Activated T-helper 2 cell treated with anti-CD3 and anti-CD28 coated beads, Interferon-gamma antibody, Interleukin-2, Interleukin-4, amounts not matched to agents 10 μg/mL and 5 μg/mL and 100 μg/mL, durations not matched to agents 14 hours and 24 hours and 36 hours (primary cell): ENCODE measurements at regions of chr3 and their contacts with region 1.

Region 1: DNA sequence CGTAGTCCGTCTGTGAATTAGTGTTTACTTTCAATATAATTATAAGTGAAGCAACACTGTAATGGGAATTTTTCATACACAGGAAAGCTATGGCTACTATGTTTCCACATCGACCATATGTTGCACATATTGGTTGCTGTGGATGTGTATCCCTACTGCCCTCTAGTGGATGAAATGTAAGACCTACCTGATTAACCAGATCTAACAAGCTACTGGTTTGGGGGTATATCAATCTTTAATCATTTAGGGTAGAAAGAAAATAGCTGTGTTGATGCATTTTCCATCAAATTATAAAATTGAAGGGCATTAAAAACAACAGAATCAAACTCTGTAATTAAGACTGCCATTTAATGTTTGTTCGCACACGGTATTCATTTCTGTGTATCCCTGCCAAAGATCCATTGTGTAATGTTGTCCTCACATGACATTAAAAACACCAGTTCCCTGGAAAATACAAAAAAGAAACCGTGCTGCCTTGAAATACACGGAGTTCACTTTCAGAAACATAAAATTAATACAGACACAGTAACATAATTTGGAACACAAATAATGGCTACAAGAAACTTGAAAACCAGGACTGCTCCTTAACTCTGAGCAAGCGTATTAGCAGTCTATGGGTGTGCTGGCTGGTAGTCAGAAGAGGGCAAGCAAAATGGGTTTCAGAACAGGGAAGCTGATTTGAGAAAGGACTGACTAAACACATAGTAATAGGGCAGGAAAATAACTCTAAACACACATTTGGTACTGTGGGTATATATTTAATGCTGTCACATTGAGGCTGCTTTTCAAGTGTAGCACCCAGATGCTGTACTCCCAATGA is 125.1 kb downstream of the TIGIT start:
- DNase-seq: no peak
- H3K4me3 Mint-ChIP-seq: no peak overlapping the region
- H3K27ac Mint-ChIP-seq: peak overlapping the region; percentile 84
- H3K4me1 Mint-ChIP-seq: peaks cover 29% of the 10 kb centered on the region
- H3K27me3 Mint-ChIP-seq: no peaks in the 10 kb centered on the region

Region 2: DNA sequence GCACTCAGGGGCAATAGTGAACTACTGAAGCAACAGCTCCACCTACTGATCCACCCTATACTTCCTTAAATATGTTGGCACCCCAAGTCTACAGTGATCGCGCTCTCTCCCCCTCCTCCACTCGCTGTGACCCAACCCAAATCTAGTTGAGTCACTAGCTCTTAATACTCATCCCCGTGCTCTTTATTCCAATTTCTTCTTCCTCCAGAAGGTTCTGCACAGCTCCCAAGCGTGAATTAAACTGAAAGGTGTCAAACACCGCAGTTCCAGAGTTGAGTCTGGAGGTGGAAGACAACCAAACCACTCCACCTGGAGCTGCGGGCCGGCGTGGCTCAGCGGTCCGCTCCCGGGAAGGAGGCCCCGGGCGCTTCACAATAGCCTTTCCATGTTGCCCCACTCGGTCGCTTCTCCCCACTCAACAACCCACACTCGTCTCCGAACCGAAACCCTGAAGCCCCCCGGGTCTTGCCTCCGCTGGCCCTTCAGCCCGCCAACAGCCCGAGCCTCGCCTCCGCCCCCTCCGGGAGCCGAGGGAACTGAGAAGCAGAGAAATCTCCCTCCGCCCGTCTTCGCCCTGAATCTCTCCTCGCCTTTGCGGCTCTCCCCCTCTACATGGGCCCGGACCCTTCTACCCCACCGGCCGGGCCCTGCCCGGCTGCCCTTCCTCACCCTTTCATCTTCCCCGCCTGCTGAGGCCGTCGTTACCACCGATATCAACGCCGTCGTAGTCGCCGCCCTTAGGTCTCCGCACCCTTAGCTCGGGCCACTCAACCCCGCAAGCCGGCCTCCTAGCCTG is 673.5 kb before region 1 on chr3:
- intact Hi-C with region 1: loop called (anchors 2 kb)
- DNase-seq: peak; percentile 73
- H3K4me3 Mint-ChIP-seq: peak overlapping the region; percentile 96
- H3K27ac Mint-ChIP-seq: peak overlapping the region; percentile 100
- H3K4me1 Mint-ChIP-seq: peaks cover 64% of the 10 kb centered on the region
- H3K27me3 Mint-ChIP-seq: peaks cover 3% of the 10 kb centered on the region

Region 3: GRCh38 chr3:114144909-114145647 is 273.9 kb before region 1 on chr3:
- intact Hi-C with region 1: loop called (anchors 1 kb)
- DNase-seq: no peak
- H3K4me3 Mint-ChIP-seq: no peak overlapping the region
- H3K27ac Mint-ChIP-seq: no peak overlapping the region
- H3K4me1 Mint-ChIP-seq: peaks cover 6% of the 10 kb centered on the region
- H3K27me3 Mint-ChIP-seq: no peaks in the 10 kb centered on the region

Region 4: DNA sequence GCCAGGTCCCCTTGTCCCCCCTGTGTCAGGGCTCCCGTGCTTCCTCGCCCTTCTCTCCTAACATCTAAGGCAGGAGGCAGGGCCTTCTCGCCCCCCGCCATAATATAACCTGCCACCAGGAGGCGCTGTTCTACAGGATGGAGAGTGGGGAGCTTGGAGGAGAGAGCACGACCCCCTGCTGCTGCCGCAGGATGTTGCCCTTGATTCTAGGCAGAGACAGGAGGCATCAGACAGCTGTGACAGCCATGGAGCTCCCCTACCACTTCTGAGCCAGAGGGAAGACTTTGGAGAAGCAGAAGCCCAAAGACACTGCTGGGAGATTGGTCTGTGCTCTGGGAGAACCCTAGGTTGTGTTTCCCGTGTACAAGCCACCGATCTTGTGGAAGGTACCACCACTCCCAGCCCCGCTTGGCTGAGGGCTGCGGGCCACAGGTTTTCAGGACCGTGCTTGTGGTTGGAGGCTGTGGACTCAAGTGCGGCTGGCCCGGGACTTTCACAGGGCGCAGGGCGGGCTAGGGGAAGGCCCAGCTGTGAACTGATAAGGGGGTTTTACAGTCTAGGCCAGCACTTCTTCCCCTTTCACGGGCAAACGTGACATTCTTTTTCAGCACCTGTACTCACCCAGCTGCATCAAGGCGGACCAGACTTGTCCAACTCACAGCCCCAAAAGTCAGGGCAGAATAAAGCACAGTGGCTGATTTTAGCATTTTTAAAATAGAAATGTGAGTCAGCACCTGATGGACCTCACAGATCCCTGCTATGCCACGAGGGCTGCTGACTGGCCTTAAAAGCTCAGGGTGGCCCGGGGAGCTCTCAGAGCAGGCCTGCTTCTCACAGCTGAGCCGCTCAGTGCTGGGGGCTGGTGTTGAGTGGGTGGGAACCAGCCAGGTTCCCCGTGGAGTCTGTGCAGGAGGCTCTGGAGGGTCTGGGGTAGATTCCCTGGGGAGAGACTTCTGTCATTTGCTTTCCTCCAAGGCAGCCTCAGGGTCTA is 127.7 kb before region 1 on chr3:
- intact Hi-C with region 1: loop called (anchors 1 kb)
- DNase-seq: peak; percentile 69
- H3K4me3 Mint-ChIP-seq: peak overlapping the region; percentile 13
- H3K27ac Mint-ChIP-seq: peak overlapping the region; percentile 84
- H3K4me1 Mint-ChIP-seq: peaks cover 31% of the 10 kb centered on the region
- H3K27me3 Mint-ChIP-seq: no peaks in the 10 kb centered on the region

Region 5: DNA sequence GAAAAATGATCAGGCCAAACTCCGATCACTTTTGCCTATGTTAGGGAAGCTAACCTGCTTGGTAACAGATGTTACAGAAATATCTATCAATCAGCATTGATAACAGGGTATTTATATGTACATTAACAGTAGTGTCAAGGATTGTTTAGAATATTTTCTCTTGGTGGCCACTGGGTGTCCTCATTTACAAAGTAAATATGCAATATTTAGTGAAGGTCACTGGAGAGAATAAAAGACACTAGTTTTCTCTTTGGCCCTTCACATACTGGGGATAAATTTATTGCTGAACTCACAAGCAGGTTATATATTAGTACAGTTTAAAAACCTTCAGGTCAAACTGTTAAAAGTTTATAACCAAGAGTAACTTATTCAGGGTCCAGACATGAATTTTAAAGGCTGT is 56.1 kb before region 1 on chr3:
- intact Hi-C with region 1: loop called (anchors 1 kb)
- DNase-seq: no peak
- H3K4me3 Mint-ChIP-seq: no peak overlapping the region
- H3K27ac Mint-ChIP-seq: no peak overlapping the region
- H3K4me1 Mint-ChIP-seq: peaks cover 14% of the 10 kb centered on the region
- H3K27me3 Mint-ChIP-seq: no peaks in the 10 kb centered on the region

Region 6: GRCh38 chr3:114476511-114476910 is 57.6 kb after region 1 on chr3:
- intact Hi-C with region 1: no loop called
- DNase-seq: no peak
- H3K4me3 Mint-ChIP-seq: no peak overlapping the region
- H3K27ac Mint-ChIP-seq: no peak overlapping the region
- H3K4me1 Mint-ChIP-seq: peaks cover 6% of the 10 kb centered on the region
- H3K27me3 Mint-ChIP-seq: peaks cover 1% of the 10 kb centered on the region

Region 7: GRCh38 chr3:115658337-115659181 is 1239.6 kb after region 1 on chr3:
- intact Hi-C with region 1: loop called (anchors 10 kb)
- DNase-seq: peak; percentile 62
- H3K4me3 Mint-ChIP-seq: peak overlapping the region; percentile 93
- H3K27ac Mint-ChIP-seq: peak overlapping the region; percentile 99
- H3K4me1 Mint-ChIP-seq: peaks cover 33% of the 10 kb centered on the region
- H3K27me3 Mint-ChIP-seq: peaks cover 5% of the 10 kb centered on the region